PC-3 (cell line): ENCODE measurements at regions of chr3 and their contacts with region 1.

Region 1: GRCh38 chr3:129233538-129233937 is 15.9 kb upstream of the COPG1 start:
- DNase-seq: no peak
- ATAC-seq: no peak
- H3K4me3 ChIP-seq: no peak overlapping the region
- H3K27ac ChIP-seq: no peak overlapping the region
- H3K4me1 ChIP-seq: peaks cover 34% of the 10 kb centered on the region
- H3K27me3 ChIP-seq: no peaks in the 10 kb centered on the region
- CTCF ChIP-seq: no peak

Region 2: GRCh38 chr3:129195731-129196256 is 37.7 kb before region 1 on chr3:
- CTCF ChIA-PET with region 1: no interaction called
- POLR2A ChIA-PET with region 1: no interaction called
- intact Hi-C with region 1: loop called (anchors 5 kb)
- DNase-seq: peak; percentile 83
- ATAC-seq: peak; percentile 98
- H3K4me3 ChIP-seq: peak overlapping the region; percentile 45
- H3K27ac ChIP-seq: peak overlapping the region; percentile 85
- H3K4me1 ChIP-seq: peaks cover 24% of the 10 kb centered on the region
- H3K27me3 ChIP-seq: no peaks in the 10 kb centered on the region
- CTCF ChIP-seq: no peak

Region 3: DNA sequence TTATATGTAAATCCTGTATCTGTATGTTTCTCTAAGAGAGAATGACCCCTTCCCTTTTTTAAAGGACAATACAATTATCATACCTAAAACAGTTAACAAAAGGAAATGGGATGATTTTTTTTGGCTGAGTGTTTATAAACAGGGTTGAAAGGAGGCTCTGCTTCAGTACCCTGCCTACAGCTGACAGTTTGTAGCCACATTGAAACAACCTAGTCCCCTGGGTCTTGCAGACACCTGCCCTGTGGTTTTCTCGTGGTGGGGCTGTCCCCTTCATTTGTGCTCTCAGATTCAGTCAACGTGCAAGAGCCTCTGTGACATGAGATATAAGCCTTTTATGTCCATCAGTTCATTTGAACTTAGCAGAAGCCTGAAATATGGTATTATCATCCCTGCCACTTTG is 42.8 kb after region 1 on chr3:
- CTCF ChIA-PET with region 1: no interaction called
- POLR2A ChIA-PET with region 1: no interaction called
- intact Hi-C with region 1: no loop called
- DNase-seq: no peak
- ATAC-seq: no peak
- H3K4me3 ChIP-seq: no peak overlapping the region
- H3K27ac ChIP-seq: no peak overlapping the region
- H3K4me1 ChIP-seq: peaks cover 8% of the 10 kb centered on the region; the same call in 1 of the 2 replicates
- H3K27me3 ChIP-seq: no peaks in the 10 kb centered on the region
- CTCF ChIP-seq: no peak